ENCODE measurements at regions of chr15 and their contacts with region 1.

Region 1: GRCh38 chr15:51801391-51801835 is 28.0 kb upstream of the TMOD3 start:
- DNase-seq: no peak
- ATAC-seq: peak; percentile 91
- H3K4me3 ChIP-seq: no peak overlapping the region
- H3K27ac ChIP-seq: no peak overlapping the region
- H3K4me1 ChIP-seq: 0 out of 2 replicates have a peak, but pooled peaks cover 4% of the 10 kb centered on the region
- H3K27me3 ChIP-seq: no peaks in the 10 kb centered on the region; the same call in 1 of the 2 replicates
- CTCF ChIP-seq: peak; percentile 84

Region 2: GRCh38 chr15:51499379-51499976 is 301.9 kb before region 1 on chr15:
- CTCF ChIA-PET with region 1: no interaction called
- POLR2A ChIA-PET with region 1: interaction called, 14 read pairs
- in situ Hi-C with region 1: no loop called
- intact Hi-C with region 1: no loop called
- DNase-seq: peak; percentile 41
- ATAC-seq: peak; percentile 90
- H3K4me3 ChIP-seq: no peak overlapping the region
- H3K27ac ChIP-seq: no peak overlapping the region
- H3K4me1 ChIP-seq: no peaks in the 10 kb centered on the region
- H3K27me3 ChIP-seq: no peaks in the 10 kb centered on the region
- CTCF ChIP-seq: peak; percentile 68

Region 3: GRCh38 chr15:51739061-51739712 is 62.2 kb before region 1 on chr15:
- CTCF ChIA-PET with region 1: no interaction called
- POLR2A ChIA-PET with region 1: no interaction called
- in situ Hi-C with region 1: no loop called
- intact Hi-C with region 1: no loop called
- DNase-seq: no peak
- ATAC-seq: no peak
- H3K4me3 ChIP-seq: no peak overlapping the region
- H3K27ac ChIP-seq: no peak overlapping the region
- H3K4me1 ChIP-seq: peaks cover 12% of the 10 kb centered on the region
- H3K27me3 ChIP-seq: peaks cover 3% of the 10 kb centered on the region; the same call in 1 of the 2 replicates
- CTCF ChIP-seq: no peak

Region 4: GRCh38 chr15:51776952-51777574 is 24.4 kb before region 1 on chr15:
- CTCF ChIA-PET with region 1: no interaction called
- POLR2A ChIA-PET with region 1: no interaction called
- in situ Hi-C with region 1: no loop called
- intact Hi-C with region 1: no loop called
- DNase-seq: peak; percentile 74
- ATAC-seq: peak; percentile 95
- H3K4me3 ChIP-seq: no peak overlapping the region
- H3K27ac ChIP-seq: no peak overlapping the region
- H3K4me1 ChIP-seq: no peaks in the 10 kb centered on the region
- H3K27me3 ChIP-seq: no peaks in the 10 kb centered on the region
- CTCF ChIP-seq: peak; percentile 77

Measured in Panc1 (cell line).